ENCODE measurements at regions of chr16 and their contacts with region 1.

Region 1: DNA sequence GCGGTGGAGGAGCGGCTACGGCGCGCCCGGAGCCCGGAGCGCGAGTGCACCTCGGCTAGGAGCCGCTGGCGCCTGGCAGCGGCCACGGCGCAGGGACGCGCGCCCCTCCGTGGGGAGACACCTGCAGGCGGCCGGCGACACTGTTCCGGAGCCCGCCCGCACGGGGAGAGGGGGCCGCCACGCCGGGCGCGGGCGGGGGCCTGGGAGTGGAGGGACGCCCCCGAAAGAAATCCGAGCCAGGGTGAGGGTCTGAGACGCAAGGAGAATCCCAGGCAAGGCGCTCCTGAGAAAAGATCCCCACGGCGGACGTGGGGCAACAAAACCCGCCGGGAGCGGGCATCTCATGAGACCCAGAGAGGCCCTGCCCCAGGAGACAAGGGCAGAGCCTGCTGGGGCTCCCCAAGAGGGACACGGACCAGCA is at the start of gene GSG1L:
- DNase-seq: no peak
- H3K4me3 ChIP-seq: peak within 1 kb of the TSS in 1 of 3 experiments; percentile 18
- H3K27ac ChIP-seq: no peak within 1 kb of the TSS
- H3K4me1 ChIP-seq: no peaks in the 10 kb centered on the region
- H3K27me3 ChIP-seq: peaks cover 21 to 43% of the 10 kb centered on the region in 2 experiments
- CTCF ChIP-seq: no peak
- POLR2A ChIP-seq: no peak
- total RNA-seq, gene GSG1L: not detected in 2 replicates

Region 2: GRCh38 chr16:27690608-27691007 is 373.0 kb before region 1 on chr16:
- CTCF ChIA-PET with region 1: no interaction called
- POLR2A ChIA-PET with region 1: no interaction called
- dilution Hi-C with region 1: no loop called
- intact Hi-C with region 1: loop called (anchors 1 kb)
- DNase-seq: peak; percentile 28
- H3K4me3 ChIP-seq: no peak overlapping the region
- H3K27ac ChIP-seq: no peak overlapping the region
- H3K4me1 ChIP-seq: no peaks in the 10 kb centered on the region
- H3K27me3 ChIP-seq: no peaks in the 10 kb centered on the region
- CTCF ChIP-seq: peak; percentile 65 to 71
- POLR2A ChIP-seq: no peak

Region 3: DNA sequence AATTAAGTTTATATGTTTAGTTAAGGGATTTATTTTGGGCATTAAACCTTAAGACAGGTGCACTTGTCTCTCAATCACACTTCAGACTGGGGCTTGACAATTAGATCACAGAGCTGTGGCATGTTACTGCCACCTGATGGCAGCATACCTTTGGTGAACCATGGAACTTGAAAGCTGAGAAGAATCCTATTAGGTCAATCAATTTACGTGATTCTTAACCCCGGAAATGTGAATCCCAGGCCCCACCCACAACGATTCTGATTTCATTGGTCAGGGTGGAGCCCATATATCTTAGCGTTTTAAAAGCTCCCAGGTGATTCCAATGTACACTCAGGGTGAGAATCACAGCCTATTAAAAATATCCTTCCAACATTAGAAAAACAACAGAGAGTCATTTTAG is 91.2 kb before region 1 on chr16:
- CTCF ChIA-PET with region 1: interaction called, 80 read pairs
- POLR2A ChIA-PET with region 1: no interaction called
- dilution Hi-C with region 1: no loop called
- intact Hi-C with region 1: no loop called
- DNase-seq: peak; percentile 49
- H3K4me3 ChIP-seq: no peak overlapping the region
- H3K27ac ChIP-seq: no peak overlapping the region
- H3K4me1 ChIP-seq: no peaks in the 10 kb centered on the region
- H3K27me3 ChIP-seq: no peaks in the 10 kb centered on the region
- CTCF ChIP-seq: peak; percentile 32 to 55
- POLR2A ChIP-seq: no peak

Measured in endothelial cell of umbilical vein (primary cell).